CD4-positive, alpha-beta T cell (primary cell): ENCODE measurements at regions of chr6 and their contacts with region 1.

Region 1: GRCh38 chr6:24581084-24581669 is 64.8 kb downstream of the KIAA0319 start:
- DNase-seq: peak; percentile 64 to 86 (median 72)
- ATAC-seq: peak; percentile 91
- H3K4me3 ChIP-seq: no peak overlapping the region
- H3K4me3 Mint-ChIP-seq: no peak overlapping the region
- H3K27ac ChIP-seq: no peak overlapping the region
- H3K27ac Mint-ChIP-seq: no peak overlapping the region
- H3K4me1 ChIP-seq: no peaks in the 10 kb centered on the region
- H3K4me1 Mint-ChIP-seq: peaks cover 5% of the 10 kb centered on the region
- H3K27me3 ChIP-seq: no peaks in the 10 kb centered on the region
- H3K27me3 Mint-ChIP-seq: peaks cover 4% of the 10 kb centered on the region
- CTCF ChIP-seq: peak; percentile 80

Region 2: DNA sequence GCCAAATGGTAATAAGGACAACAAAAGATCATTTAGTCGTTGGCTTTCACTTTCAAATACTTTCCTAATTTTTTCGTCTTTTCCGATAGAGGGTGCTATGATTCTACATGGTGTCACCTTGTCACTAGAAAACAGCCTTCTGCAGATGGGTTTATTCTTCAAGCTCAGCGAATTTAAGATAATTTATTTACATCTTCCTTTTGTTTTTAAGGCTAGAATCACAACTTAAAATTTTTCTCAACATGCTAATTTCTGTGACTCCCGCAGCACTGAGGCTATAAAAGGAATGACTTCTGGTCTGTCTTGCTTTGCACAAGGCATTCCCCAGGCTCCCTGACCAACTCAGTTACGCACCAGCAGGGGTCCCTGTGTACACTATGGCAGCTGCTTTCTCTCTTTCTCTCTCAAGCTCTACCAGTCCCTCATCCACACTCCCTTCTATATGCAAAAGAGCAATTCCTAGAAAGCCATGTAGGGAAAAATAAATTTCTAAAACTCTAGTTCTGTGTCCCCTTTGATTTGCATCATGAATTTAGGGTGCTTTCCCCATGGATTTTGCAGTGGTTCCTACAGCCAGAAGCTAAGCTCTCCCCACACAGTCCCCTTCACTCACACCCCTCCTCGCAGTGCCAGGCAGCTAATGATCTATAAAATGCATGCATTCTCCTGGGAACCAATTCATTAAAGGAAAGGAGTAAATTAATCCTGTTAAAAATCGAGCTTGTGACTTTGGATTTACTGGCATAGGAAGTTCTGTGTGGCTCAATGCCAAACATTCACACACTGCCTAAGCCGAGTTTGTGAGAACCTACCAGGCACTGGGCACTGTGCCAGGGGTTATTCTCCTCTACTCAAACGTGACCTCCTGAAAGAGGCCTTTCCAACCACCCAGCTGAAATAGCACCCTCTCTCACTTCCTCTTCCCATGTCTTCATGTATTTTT is 297.9 kb before region 1 on chr6:
- CTCF ChIA-PET with region 1: no interaction called
- POLR2A ChIA-PET with region 1: no interaction called
- intact Hi-C with region 1: loop called in 1 of 2 experiments (anchors 5 kb)
- DNase-seq: peak in 12 of 14 experiments; percentile 3 to 57 (median 14)
- ATAC-seq: peak; percentile 80
- H3K4me3 ChIP-seq: no peak overlapping the region
- H3K4me3 Mint-ChIP-seq: peak overlapping the region; percentile 48
- H3K27ac ChIP-seq: no peak overlapping the region
- H3K27ac Mint-ChIP-seq: no peak overlapping the region
- H3K4me1 ChIP-seq: peaks cover 3% of the 10 kb centered on the region
- H3K4me1 Mint-ChIP-seq: peaks cover 8% of the 10 kb centered on the region
- H3K27me3 ChIP-seq: peaks cover 2 to 12% of the 10 kb centered on the region in 2 experiments
- H3K27me3 Mint-ChIP-seq: peaks cover 33% of the 10 kb centered on the region
- CTCF ChIP-seq: peak; percentile 78

Region 3: DNA sequence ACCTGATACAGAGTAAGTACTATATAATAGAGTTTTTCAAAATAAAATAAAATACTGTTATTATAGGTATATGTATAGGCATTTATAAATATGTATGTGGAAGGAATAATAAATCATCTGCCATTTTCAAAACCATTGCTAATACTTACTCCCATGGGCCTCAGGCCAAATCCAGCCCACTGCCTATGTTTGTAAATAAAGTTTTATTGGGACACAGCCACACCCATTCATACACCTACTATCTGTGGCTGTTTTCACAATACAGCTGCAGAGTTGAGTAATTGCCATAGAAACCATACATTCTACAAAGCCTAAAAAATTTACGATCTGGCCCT is 76.9 kb before region 1 on chr6:
- CTCF ChIA-PET with region 1: no interaction called
- POLR2A ChIA-PET with region 1: no interaction called
- intact Hi-C with region 1: no loop called
- DNase-seq: no peak
- ATAC-seq: no peak
- H3K4me3 ChIP-seq: no peak overlapping the region
- H3K4me3 Mint-ChIP-seq: no peak overlapping the region
- H3K27ac ChIP-seq: no peak overlapping the region
- H3K27ac Mint-ChIP-seq: no peak overlapping the region
- H3K4me1 ChIP-seq: no peaks in the 10 kb centered on the region
- H3K4me1 Mint-ChIP-seq: peaks cover 4% of the 10 kb centered on the region
- H3K27me3 ChIP-seq: no peaks in the 10 kb centered on the region
- H3K27me3 Mint-ChIP-seq: no peaks in the 10 kb centered on the region
- CTCF ChIP-seq: no peak

Region 4: DNA sequence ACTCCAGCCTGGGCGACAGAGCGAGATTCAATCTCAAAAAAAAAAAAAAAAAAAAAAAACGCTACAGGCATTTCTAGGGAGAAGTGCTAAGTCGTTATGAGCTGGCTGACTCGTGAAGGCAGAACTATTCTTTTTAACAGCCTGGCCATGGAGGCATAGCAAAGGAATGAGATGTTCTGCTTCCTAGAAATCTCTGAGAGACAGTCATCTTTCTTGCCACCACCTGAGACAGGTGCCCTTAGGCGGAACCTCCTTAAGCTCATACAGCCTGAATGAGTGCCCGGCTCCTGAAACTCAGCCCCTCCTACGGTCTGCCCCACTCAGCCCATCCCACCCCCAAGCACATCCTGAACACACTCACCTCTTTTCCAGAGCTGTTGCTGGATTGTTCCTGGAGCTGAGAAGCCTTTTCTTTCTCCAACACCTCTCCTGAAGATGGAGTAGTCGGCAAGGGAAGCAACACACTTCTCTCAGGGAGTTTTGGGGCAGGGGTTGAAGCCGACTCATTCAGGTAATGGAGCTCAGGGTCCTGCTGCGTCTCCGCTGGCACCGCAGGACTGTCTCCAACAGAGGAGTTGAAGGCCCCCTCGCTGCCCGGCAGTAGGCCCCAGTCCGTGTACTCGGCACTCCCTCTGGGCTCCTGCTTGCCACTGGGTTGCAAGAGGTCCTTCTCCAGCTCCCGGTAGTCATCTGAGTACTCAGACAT is 14.5 kb after region 1 on chr6:
- CTCF ChIA-PET with region 1: interaction called, 10 read pairs
- POLR2A ChIA-PET with region 1: no interaction called
- intact Hi-C with region 1: no loop called
- DNase-seq: no peak
- ATAC-seq: no peak
- H3K4me3 ChIP-seq: no peak overlapping the region
- H3K4me3 Mint-ChIP-seq: no peak overlapping the region
- H3K27ac ChIP-seq: no peak overlapping the region
- H3K27ac Mint-ChIP-seq: no peak overlapping the region
- H3K4me1 ChIP-seq: no peaks in the 10 kb centered on the region
- H3K4me1 Mint-ChIP-seq: no peaks in the 10 kb centered on the region
- H3K27me3 ChIP-seq: no peaks in the 10 kb centered on the region
- H3K27me3 Mint-ChIP-seq: no peaks in the 10 kb centered on the region
- CTCF ChIP-seq: no peak

Region 5: GRCh38 chr6:24666641-24667377 is 85.6 kb after region 1 on chr6 and contains the starts of genes ACOT13 and TDP2:
- CTCF ChIA-PET with region 1: interaction called, 21 read pairs
- POLR2A ChIA-PET with region 1: interaction called, 7 read pairs
- intact Hi-C with region 1: no loop called
- DNase-seq: peak; percentile 92 to 99 (median 95)
- ATAC-seq: peak; percentile 92
- H3K4me3 ChIP-seq: peak within 1 kb of the TSS; percentile 96
- H3K4me3 Mint-ChIP-seq: peak within 1 kb of the TSS; percentile 100
- H3K27ac ChIP-seq: peak within 1 kb of the TSS; percentile 78 to 83
- H3K27ac Mint-ChIP-seq: peak within 1 kb of the TSS; percentile 97
- H3K4me1 ChIP-seq: peaks cover 33% of the 10 kb centered on the region
- H3K4me1 Mint-ChIP-seq: peaks cover 45% of the 10 kb centered on the region
- H3K27me3 ChIP-seq: no peaks in the 10 kb centered on the region
- H3K27me3 Mint-ChIP-seq: no peaks in the 10 kb centered on the region
- CTCF ChIP-seq: peak; percentile 39
- total RNA-seq, gene ACOT13: 1.5 TPM
- total RNA-seq, gene TDP2: 63.9 to 64.6 TPM

Region 6: GRCh38 chr6:24699521-24700359 is 118.6 kb after region 1 on chr6:
- CTCF ChIA-PET with region 1: interaction called, 15 read pairs
- POLR2A ChIA-PET with region 1: interaction called, 5 read pairs
- intact Hi-C with region 1: loop called (anchors 1 kb)
- DNase-seq: no peak
- ATAC-seq: no peak
- H3K4me3 ChIP-seq: no peak overlapping the region
- H3K4me3 Mint-ChIP-seq: no peak overlapping the region
- H3K27ac ChIP-seq: no peak overlapping the region
- H3K27ac Mint-ChIP-seq: peak overlapping the region; percentile 69
- H3K4me1 ChIP-seq: no peaks in the 10 kb centered on the region
- H3K4me1 Mint-ChIP-seq: peaks cover 25% of the 10 kb centered on the region
- H3K27me3 ChIP-seq: no peaks in the 10 kb centered on the region
- H3K27me3 Mint-ChIP-seq: no peaks in the 10 kb centered on the region
- CTCF ChIP-seq: no peak

Region 7: GRCh38 chr6:25070547-25071366 is 489.6 kb after region 1 on chr6:
- CTCF ChIA-PET with region 1: interaction called, 3 read pairs
- POLR2A ChIA-PET with region 1: no interaction called
- intact Hi-C with region 1: loop called (anchors 2 to 5 kb)
- DNase-seq: peak; percentile 71 to 93 (median 76)
- ATAC-seq: peak; percentile 99
- H3K4me3 ChIP-seq: no peak overlapping the region
- H3K4me3 Mint-ChIP-seq: peak overlapping the region; percentile 14
- H3K27ac ChIP-seq: no peak overlapping the region
- H3K27ac Mint-ChIP-seq: peak overlapping the region; percentile 75
- H3K4me1 ChIP-seq: peaks cover 4% of the 10 kb centered on the region
- H3K4me1 Mint-ChIP-seq: peaks cover 10% of the 10 kb centered on the region
- H3K27me3 ChIP-seq: no peaks in the 10 kb centered on the region
- H3K27me3 Mint-ChIP-seq: no peaks in the 10 kb centered on the region
- CTCF ChIP-seq: peak; percentile 98